ENCODE measurements at regions of chr14 and their contacts with region 1.

Region 1: GRCh38 chr14:90518941-90519256 is 122.1 kb downstream of the CALM1 start:
- DNase-seq: peak in 8 of 9 donors; percentile 21 to 59 (median 50)
- ATAC-seq: peak; percentile 65
- H3K4me3 ChIP-seq: no peak overlapping the region
- H3K4me3 Mint-ChIP-seq: no peak overlapping the region
- H3K27ac ChIP-seq: no peak overlapping the region
- H3K27ac Mint-ChIP-seq: no peak overlapping the region
- H3K4me1 ChIP-seq: no peaks in the 10 kb centered on the region
- H3K4me1 Mint-ChIP-seq: no peaks in the 10 kb centered on the region
- H3K27me3 ChIP-seq: no peaks in the 10 kb centered on the region
- H3K27me3 Mint-ChIP-seq: peaks cover 0 to 7% (median 0%) of the 10 kb centered on the region in 5 donors

Region 2: DNA sequence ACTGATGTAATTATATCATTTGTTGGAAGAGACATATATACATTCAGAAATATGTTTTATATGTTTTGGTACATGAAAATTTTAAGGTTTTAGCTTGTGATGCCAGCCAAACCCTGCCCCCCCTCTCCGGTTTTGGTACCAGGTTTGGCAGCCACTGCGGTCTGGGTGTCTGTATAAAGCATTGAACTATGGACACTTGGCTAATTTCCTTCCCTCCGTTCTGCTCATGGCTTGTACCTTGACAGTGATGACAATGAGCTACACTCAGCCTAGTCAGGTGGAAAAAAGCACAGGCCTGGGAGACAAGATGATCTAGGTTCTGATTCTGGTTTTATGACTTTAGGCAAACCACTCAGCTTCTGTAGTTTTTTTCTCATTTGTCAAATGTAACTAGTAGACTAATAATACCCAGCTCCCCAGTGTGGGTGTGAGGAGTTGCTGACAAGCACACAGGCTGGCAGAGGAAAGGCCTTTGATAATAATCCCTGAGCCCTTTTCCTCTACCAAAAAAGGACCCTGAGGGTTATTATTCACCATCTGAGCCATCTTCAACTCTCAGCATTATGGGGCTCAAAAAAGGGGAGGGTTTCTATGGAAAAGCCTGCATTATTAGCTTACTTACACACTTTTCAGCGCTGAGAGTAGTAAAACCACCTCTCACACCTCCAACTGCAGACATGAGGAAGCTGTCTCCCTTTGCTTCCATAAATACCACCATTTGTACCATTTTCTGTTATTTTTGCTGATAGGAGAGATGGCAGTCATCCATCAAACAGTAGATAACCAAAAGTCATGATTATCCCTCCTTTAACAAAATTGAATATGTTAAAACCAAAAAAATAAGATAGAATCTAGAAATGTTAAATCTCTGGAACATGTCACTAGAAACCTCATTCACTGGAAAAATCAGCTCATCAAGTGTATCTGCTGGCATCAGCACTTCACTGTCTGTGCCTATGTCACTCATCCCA is 338.8 kb before region 1 on chr14:
- CTCF ChIA-PET with region 1: no interaction called
- POLR2A ChIA-PET with region 1: no interaction called
- intact Hi-C with region 1: no loop called
- DNase-seq: no peak
- ATAC-seq: no peak
- H3K4me3 ChIP-seq: no peak overlapping the region
- H3K4me3 Mint-ChIP-seq: no peak overlapping the region
- H3K27ac ChIP-seq: no peak overlapping the region
- H3K27ac Mint-ChIP-seq: no peak overlapping the region
- H3K4me1 ChIP-seq: no peaks in the 10 kb centered on the region
- H3K4me1 Mint-ChIP-seq: no peaks in the 10 kb centered on the region
- H3K27me3 ChIP-seq: no peaks in the 10 kb centered on the region
- H3K27me3 Mint-ChIP-seq: peaks cover 6 to 10% (median 8%) of the 10 kb centered on the region in 5 donors

Region 3: DNA sequence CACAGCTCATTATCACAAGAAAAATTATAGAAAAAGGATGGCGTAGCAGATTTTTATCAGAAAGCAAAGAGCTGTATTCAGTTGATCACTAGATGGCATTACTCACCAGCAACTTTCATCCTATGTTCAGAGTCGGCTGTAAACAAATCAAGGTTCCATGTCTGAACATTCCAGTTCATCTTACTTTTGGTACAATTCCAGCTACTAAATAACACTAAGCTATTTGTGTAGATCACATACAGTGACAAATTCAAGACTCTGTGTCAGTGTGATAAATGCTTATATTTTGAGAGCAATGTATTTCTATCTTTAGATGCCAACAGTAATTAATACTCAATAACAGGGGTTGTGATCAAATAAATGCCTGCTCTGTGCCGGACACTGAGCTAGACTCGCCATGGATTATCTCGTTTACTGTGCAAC is 217.2 kb before region 1 on chr14:
- CTCF ChIA-PET with region 1: no interaction called
- POLR2A ChIA-PET with region 1: no interaction called
- intact Hi-C with region 1: loop called in 1 of 2 experiments (anchors 2 kb)
- DNase-seq: peak in 4 of 9 donors; percentile 2 to 28 (median 16)
- ATAC-seq: no peak
- H3K4me3 ChIP-seq: no peak overlapping the region
- H3K4me3 Mint-ChIP-seq: no peak overlapping the region
- H3K27ac ChIP-seq: no peak overlapping the region
- H3K27ac Mint-ChIP-seq: peak overlapping the region in 7 of 9 donors; percentile 26 to 82 (median 56)
- H3K4me1 ChIP-seq: no peaks in the 10 kb centered on the region
- H3K4me1 Mint-ChIP-seq: peaks cover 13 to 31% (median 20%) of the 10 kb centered on the region in 7 donors
- H3K27me3 ChIP-seq: no peaks in the 10 kb centered on the region
- H3K27me3 Mint-ChIP-seq: no peaks in the 10 kb centered on the region

Region 4: DNA sequence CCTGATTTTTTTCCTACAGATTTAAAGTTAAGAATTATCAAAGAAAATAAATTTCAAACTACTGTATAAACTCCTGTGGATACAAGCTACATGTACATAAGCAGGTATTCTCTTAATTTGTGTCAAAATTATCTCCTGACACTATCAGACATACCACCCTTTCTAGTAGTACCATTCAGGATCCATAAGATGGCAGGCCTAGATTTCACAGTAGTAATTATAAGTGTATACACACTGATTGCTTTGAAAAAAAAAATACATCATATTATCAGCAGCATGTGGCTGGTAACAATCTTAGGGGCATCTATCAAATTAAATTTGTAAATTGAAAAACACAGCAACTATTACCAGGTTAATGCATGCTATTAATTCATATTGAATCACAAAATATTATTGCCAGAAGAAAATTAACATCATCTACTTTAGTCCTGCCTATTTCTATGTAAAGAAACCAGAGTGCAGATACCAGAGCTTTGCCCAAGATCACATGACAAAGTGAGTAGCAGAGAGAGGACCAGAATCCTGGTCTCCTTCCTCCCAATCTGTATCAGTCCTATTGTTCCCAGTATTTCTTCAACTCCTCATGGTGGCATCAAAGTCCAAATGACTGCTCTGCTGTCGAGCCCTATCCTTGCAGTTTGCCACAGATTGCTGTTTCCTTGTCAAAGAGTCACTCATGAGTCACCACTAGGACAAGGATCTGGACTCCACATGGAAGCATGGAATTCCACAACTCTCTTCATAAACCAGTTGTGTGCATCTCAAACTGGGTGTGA is 149.8 kb before region 1 on chr14:
- CTCF ChIA-PET with region 1: no interaction called
- POLR2A ChIA-PET with region 1: no interaction called
- intact Hi-C with region 1: loop called in 1 of 2 experiments (anchors 1 kb)
- DNase-seq: peak in 7 of 9 donors; percentile 25 to 60 (median 39)
- ATAC-seq: peak; percentile 90
- H3K4me3 ChIP-seq: no peak overlapping the region
- H3K4me3 Mint-ChIP-seq: no peak overlapping the region
- H3K27ac ChIP-seq: no peak overlapping the region
- H3K27ac Mint-ChIP-seq: no peak overlapping the region
- H3K4me1 ChIP-seq: no peaks in the 10 kb centered on the region
- H3K4me1 Mint-ChIP-seq: peaks cover 0 to 8% (median 4%) of the 10 kb centered on the region in 7 donors
- H3K27me3 ChIP-seq: no peaks in the 10 kb centered on the region
- H3K27me3 Mint-ChIP-seq: peaks cover 0 to 25% (median 0%) of the 10 kb centered on the region in 5 donors

Region 5: DNA sequence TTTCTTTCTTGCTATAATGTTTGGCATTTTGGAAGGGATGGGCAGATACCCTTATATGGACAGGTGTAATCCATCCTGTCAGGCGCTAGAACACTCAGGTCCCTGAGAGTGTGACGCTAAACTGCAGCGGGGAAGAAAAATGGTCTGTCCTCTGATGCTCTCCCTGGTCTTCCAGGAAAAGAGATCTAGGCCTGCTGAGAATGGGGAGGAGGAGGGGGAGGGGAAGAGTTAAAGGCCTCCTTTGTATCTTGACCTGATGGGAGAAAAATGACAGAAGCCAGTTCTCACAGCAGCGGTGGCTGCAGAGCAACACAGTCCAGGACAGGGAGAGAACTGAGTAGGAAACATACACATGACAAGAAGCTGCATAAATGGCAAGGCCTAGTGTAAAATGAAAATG is 480.4 kb after region 1 on chr14:
- CTCF ChIA-PET with region 1: no interaction called
- POLR2A ChIA-PET with region 1: no interaction called
- intact Hi-C with region 1: no loop called
- DNase-seq: no peak
- ATAC-seq: no peak
- H3K4me3 ChIP-seq: no peak overlapping the region
- H3K4me3 Mint-ChIP-seq: no peak overlapping the region
- H3K27ac ChIP-seq: no peak overlapping the region
- H3K27ac Mint-ChIP-seq: peak overlapping the region in 1 of 9 donors; percentile 5
- H3K4me1 ChIP-seq: no peaks in the 10 kb centered on the region
- H3K4me1 Mint-ChIP-seq: peaks cover 0 to 28% (median 12%) of the 10 kb centered on the region in 7 donors
- H3K27me3 ChIP-seq: no peaks in the 10 kb centered on the region
- H3K27me3 Mint-ChIP-seq: no peaks in the 10 kb centered on the region